Endothelial cell of umbilical vein (primary cell): ENCODE measurements at regions of chr4 and their contacts with region 1.

Region 1: DNA sequence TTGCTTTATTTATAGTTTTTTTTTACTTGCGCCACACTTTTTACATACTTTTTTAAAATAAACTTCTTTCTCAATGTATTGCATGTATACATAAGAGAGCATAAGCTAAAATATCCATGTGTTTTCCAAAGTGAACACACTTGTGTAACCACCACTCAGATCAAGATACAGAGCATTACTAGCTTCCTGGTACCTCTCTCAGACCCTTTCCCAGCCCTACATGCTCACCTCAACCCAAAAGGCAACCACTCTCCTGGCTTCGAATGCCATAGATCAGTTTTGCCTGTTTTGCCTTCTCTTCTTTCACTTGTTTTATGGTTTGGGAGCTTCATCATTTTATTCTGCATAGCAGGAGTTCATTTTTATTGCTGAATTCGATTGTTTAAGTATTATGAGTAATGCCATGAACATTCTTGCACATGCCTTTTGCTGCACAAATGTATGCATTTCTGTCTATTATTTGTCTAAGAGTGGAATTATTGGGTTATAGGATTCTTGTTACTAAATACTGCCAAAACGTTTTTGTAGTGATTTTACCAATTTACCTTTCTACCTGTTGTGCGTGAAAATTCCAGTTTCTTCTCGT is 45.9 kb upstream of the NUDT6 start:
- DNase-seq: no peak
- H3K4me3 ChIP-seq: no peak overlapping the region
- H3K27ac ChIP-seq: no peak overlapping the region
- H3K4me1 ChIP-seq: no peaks in the 10 kb centered on the region
- H3K27me3 ChIP-seq: no peaks in the 10 kb centered on the region
- CTCF ChIP-seq: no peak
- POLR2A ChIP-seq: no peak

Region 2: GRCh38 chr4:122906859-122907305 is 61.4 kb before region 1 on chr4:
- CTCF ChIA-PET with region 1: no interaction called
- POLR2A ChIA-PET with region 1: no interaction called
- dilution Hi-C with region 1: no loop called
- intact Hi-C with region 1: no loop called
- DNase-seq: no peak
- H3K4me3 ChIP-seq: no peak overlapping the region
- H3K27ac ChIP-seq: no peak overlapping the region
- H3K4me1 ChIP-seq: no peaks in the 10 kb centered on the region
- H3K27me3 ChIP-seq: no peaks in the 10 kb centered on the region
- CTCF ChIP-seq: no peak
- POLR2A ChIP-seq: no peak

Region 3: DNA sequence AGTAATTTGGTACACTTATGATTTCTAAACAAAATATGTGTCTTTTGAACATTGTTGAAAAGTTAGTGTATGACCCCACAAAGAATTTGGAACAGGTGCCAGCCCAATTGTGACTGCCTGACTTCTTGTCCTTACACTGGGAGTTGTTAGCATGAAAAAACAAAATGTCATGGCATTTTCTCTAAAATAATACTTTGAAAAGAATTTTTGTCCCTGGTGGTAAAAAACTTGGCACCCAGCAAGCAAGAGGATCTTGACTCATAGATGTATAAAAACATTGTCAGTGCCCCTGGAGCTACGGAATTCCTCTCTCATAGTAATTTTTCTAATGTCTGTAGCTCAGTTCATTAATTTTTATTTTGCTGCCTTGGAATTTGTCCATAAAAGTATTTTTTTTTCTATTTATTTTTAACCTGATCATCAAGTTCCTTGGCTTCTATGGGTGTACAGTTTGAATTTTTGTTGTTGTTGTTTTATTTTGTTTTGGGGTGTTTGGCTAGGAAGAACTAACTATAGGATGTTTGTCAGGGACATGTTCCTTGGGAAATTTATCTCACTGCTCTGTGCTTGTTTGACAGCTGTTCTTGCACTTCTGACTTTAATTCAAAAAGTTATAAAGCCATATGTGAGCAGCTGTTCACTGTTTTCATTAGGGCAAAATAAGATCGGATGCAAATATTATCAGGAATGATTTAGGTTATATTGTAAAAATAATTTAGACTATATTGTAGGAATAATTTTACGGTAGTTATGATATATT is 49.5 kb after region 1 on chr4:
- CTCF ChIA-PET with region 1: no interaction called
- POLR2A ChIA-PET with region 1: no interaction called
- dilution Hi-C with region 1: no loop called
- intact Hi-C with region 1: loop called (anchors 1 kb)
- DNase-seq: peak; percentile 76
- H3K4me3 ChIP-seq: no peak overlapping the region
- H3K27ac ChIP-seq: peak overlapping the region; percentile 67
- H3K4me1 ChIP-seq: peaks cover 13% of the 10 kb centered on the region
- H3K27me3 ChIP-seq: no peaks in the 10 kb centered on the region
- CTCF ChIP-seq: no peak
- POLR2A ChIP-seq: no peak